ENCODE measurements at regions of chr11 and their contacts with region 1.

Region 1: DNA sequence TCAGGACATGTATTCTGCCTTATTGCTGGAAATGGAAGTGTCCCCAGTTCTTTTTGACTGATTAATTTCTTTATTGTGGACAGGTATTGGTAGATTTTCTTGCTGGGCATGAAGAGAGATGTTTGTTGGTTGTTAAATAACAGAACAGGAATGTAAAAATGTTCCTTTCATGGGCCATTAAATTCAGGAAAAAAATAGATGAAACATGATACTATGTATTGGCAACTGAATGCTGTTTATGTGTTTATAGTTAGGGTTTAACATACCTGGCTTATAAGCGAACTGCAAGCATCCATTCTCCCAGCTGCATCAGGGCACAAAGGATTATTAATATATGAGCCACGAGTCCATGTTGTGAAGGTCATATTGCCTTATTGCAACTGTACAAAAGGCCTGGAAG is 368.5 kb downstream of the NELL1 start:
- DNase-seq: no peak
- H3K4me3 ChIP-seq: no peak overlapping the region
- H3K4me3 Mint-ChIP-seq: no peak overlapping the region
- H3K27ac Mint-ChIP-seq: no peak overlapping the region
- H3K4me1 ChIP-seq: peaks cover 34% of the 10 kb centered on the region
- H3K4me1 Mint-ChIP-seq: peaks cover 15% of the 10 kb centered on the region
- H3K27me3 ChIP-seq: no peaks in the 10 kb centered on the region
- H3K27me3 Mint-ChIP-seq: no peaks in the 10 kb centered on the region
- CTCF ChIP-seq: no peak

Region 2: GRCh38 chr11:20688761-20689160 is 349.1 kb before region 1 on chr11:
- CTCF ChIA-PET with region 1: no interaction called
- POLR2A ChIA-PET with region 1: no interaction called
- intact Hi-C with region 1: no loop called
- DNase-seq: no peak
- H3K4me3 ChIP-seq: no peak overlapping the region
- H3K4me3 Mint-ChIP-seq: no peak overlapping the region
- H3K27ac Mint-ChIP-seq: no peak overlapping the region
- H3K4me1 ChIP-seq: no peaks in the 10 kb centered on the region
- H3K4me1 Mint-ChIP-seq: no peaks in the 10 kb centered on the region
- H3K27me3 ChIP-seq: no peaks in the 10 kb centered on the region; the same call in 1 of the 2 replicates
- H3K27me3 Mint-ChIP-seq: peaks cover 3% of the 10 kb centered on the region
- CTCF ChIP-seq: no peak

Region 3: GRCh38 chr11:21026685-21027084 is 11.2 kb before region 1 on chr11:
- CTCF ChIA-PET with region 1: no interaction called
- POLR2A ChIA-PET with region 1: no interaction called
- intact Hi-C with region 1: loop called (anchors 1 kb)
- DNase-seq: no peak
- H3K4me3 ChIP-seq: no peak overlapping the region
- H3K4me3 Mint-ChIP-seq: no peak overlapping the region
- H3K27ac Mint-ChIP-seq: no peak overlapping the region
- H3K4me1 ChIP-seq: no peaks in the 10 kb centered on the region
- H3K4me1 Mint-ChIP-seq: no peaks in the 10 kb centered on the region
- H3K27me3 ChIP-seq: no peaks in the 10 kb centered on the region
- H3K27me3 Mint-ChIP-seq: peaks cover 6% of the 10 kb centered on the region
- CTCF ChIP-seq: no peak

Region 4: GRCh38 chr11:21059879-21060278 is 22.0 kb after region 1 on chr11:
- CTCF ChIA-PET with region 1: no interaction called
- POLR2A ChIA-PET with region 1: no interaction called
- intact Hi-C with region 1: no loop called
- DNase-seq: no peak
- H3K4me3 ChIP-seq: no peak overlapping the region
- H3K4me3 Mint-ChIP-seq: no peak overlapping the region
- H3K27ac Mint-ChIP-seq: no peak overlapping the region
- H3K4me1 ChIP-seq: no peaks in the 10 kb centered on the region
- H3K4me1 Mint-ChIP-seq: no peaks in the 10 kb centered on the region
- H3K27me3 ChIP-seq: no peaks in the 10 kb centered on the region
- H3K27me3 Mint-ChIP-seq: no peaks in the 10 kb centered on the region
- CTCF ChIP-seq: no peak

Region 5: DNA sequence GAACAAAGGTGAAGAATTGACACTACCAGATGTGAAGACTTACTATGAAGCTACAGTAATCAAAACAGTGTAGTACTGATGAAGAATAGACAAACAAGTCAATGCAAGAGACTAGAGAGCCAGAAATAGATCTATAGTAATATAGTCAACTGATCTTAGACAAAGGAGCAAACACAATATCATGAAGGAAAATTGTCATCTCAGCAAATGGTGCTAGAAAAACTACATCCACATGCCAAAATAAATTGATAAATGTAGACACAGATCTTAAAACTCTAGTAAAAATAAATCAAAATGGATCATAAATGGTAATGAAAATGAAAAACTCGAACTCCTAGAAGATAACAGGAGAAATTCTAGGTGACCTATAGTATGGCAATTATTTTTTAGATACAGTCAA is 241.0 kb after region 1 on chr11:
- CTCF ChIA-PET with region 1: no interaction called
- POLR2A ChIA-PET with region 1: no interaction called
- intact Hi-C with region 1: no loop called
- DNase-seq: no peak
- H3K4me3 ChIP-seq: no peak overlapping the region
- H3K4me3 Mint-ChIP-seq: no peak overlapping the region
- H3K27ac Mint-ChIP-seq: no peak overlapping the region
- H3K4me1 ChIP-seq: no peaks in the 10 kb centered on the region
- H3K4me1 Mint-ChIP-seq: no peaks in the 10 kb centered on the region
- H3K27me3 ChIP-seq: no peaks in the 10 kb centered on the region
- H3K27me3 Mint-ChIP-seq: no peaks in the 10 kb centered on the region
- CTCF ChIP-seq: no peak